AG04449 (cell line): ENCODE measurements at regions of chr12 and their contacts with region 1.

Region 1: GRCh38 chr12:47715393-47715876 is 9.6 kb upstream of the RPAP3 start:
- DNase-seq: peak; percentile 24
- H3K4me3 ChIP-seq: no peak overlapping the region
- CTCF ChIP-seq: peak; percentile 61

Region 2: GRCh38 chr12:47725893-47726292 is 10.5 kb after region 1 on chr12:
- CTCF ChIA-PET with region 1: interaction called, 247 read pairs
- POLR2A ChIA-PET with region 1: no interaction called
- DNase-seq: peak; percentile 57
- H3K4me3 ChIP-seq: no peak overlapping the region
- CTCF ChIP-seq: no peak

Region 3: DNA sequence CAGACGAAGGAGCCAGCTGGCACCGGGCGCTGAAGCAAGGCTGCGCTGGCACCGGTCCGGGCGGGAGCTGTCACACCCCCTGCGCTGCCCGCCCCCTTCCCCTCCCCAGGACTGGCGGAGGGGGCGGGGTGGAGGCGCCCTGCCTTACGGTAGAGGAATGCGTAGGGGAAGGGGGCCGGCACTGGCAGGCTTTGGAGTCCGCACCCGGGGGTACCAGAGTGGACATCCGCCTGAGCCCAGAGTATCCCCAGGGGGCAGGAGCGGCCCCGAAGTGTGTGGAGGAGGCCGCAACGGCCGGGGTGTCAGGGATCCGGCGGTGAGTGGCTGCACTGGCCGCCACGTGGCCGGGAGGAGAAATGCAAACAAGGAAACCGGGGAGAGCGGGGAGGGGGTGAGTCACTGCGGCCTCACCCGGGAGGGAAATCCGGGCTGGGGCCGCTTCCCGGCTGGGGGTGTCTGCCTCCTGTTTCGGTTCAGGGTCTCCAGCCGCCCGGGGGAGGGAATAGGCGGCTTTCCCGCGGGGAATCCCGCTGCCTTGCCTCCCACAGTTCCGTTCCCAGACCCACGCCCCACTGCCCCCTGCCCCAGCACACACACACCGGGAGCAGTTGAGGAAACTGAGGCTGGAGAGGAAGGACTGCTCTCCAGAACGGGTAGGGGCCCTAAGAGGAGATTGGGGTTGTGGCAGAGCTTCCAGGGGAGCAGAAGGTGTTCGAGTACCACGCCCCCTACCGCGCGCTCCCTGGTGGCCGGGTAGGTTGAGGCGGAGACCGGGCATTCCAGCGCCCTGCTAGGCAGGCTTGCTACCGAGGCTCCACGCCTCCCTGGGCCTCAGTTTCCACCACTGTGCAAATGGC is 43.6 kb after region 1 on chr12 and contains the start of gene RAPGEF3:
- CTCF ChIA-PET with region 1: interaction called, 140 read pairs
- POLR2A ChIA-PET with region 1: no interaction called
- DNase-seq: no peak
- H3K4me3 ChIP-seq: peak within 1 kb of the TSS; percentile 68
- CTCF ChIP-seq: peak; percentile 71

Region 4: GRCh38 chr12:47785036-47785886 is 69.8 kb after region 1 on chr12:
- CTCF ChIA-PET with region 1: interaction called, 1,419 read pairs
- POLR2A ChIA-PET with region 1: no interaction called
- DNase-seq: no peak
- H3K4me3 ChIP-seq: no peak overlapping the region
- CTCF ChIP-seq: no peak

Region 5: GRCh38 chr12:47812797-47813510 is 97.5 kb after region 1 on chr12:
- CTCF ChIA-PET with region 1: interaction called, 11 read pairs
- POLR2A ChIA-PET with region 1: no interaction called
- DNase-seq: peak; percentile 53
- H3K4me3 ChIP-seq: peak overlapping the region; percentile 48
- CTCF ChIP-seq: no peak